ENCODE measurements at regions of chr7 and their contacts with region 1.

Region 1: GRCh38 chr7:46786221-46786954 is 795.5 kb downstream of the TNS3 start:
- DNase-seq: peak; percentile 96
- ATAC-seq: peak; percentile 91
- H3K4me3 ChIP-seq: peak overlapping the region; percentile 31; the same call in 1 of the 2 replicates
- H3K27ac ChIP-seq: peak overlapping the region; percentile 96
- H3K4me1 ChIP-seq: peaks cover 38% of the 10 kb centered on the region
- H3K27me3 ChIP-seq: no peaks in the 10 kb centered on the region
- CTCF ChIP-seq: no peak; the same call in 1 of the 2 replicates

Region 2: GRCh38 chr7:46544374-46545008 is 241.9 kb before region 1 on chr7:
- CTCF ChIA-PET with region 1: no interaction called
- POLR2A ChIA-PET with region 1: no interaction called
- intact Hi-C with region 1: loop called (anchors 1 kb)
- DNase-seq: peak; percentile 76
- ATAC-seq: peak; percentile 62
- H3K4me3 ChIP-seq: no peak overlapping the region
- H3K27ac ChIP-seq: peak overlapping the region; percentile 85
- H3K4me1 ChIP-seq: peaks cover 32% of the 10 kb centered on the region
- H3K27me3 ChIP-seq: no peaks in the 10 kb centered on the region
- CTCF ChIP-seq: no peak

Region 3: DNA sequence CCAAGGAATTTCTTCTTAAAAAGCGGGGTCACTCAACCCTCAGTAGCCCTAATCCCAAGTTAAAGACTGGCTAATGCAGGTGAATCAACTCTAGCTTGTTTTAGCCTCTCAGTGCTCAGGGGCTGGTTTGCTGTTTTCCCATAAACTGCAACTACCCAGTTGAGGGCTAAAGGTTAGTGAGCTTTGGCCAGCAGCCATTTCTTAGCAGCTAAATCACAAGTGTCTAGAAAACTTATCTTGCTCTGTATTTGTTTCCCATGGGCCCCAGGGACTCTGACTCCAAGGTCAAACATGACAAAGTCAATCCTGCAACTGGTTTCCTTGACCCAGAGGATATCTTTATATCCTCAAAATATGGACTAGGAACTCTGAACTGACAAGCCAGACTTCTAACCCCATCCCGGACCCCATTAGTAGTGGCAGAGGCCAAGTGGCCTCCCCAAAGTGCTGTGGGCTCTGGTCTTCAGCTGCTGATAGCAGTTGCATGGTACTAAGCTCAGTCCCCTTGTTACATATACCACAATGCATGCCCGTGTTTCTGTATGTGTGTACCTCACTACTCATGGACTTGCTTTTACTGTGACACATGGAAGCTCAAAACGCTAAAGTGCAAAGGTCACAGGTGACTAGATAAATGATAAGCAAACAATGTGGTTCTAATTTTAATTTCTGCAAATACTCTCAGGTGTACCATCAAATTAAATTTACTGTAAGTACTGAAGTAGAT is 72.4 kb before region 1 on chr7:
- CTCF ChIA-PET with region 1: no interaction called
- POLR2A ChIA-PET with region 1: no interaction called
- intact Hi-C with region 1: no loop called
- DNase-seq: no peak
- ATAC-seq: no peak
- H3K4me3 ChIP-seq: no peak overlapping the region
- H3K27ac ChIP-seq: no peak overlapping the region
- H3K4me1 ChIP-seq: no peaks in the 10 kb centered on the region
- H3K27me3 ChIP-seq: no peaks in the 10 kb centered on the region
- CTCF ChIP-seq: no peak

Region 4: GRCh38 chr7:46764100-46764936 is 22.1 kb before region 1 on chr7:
- CTCF ChIA-PET with region 1: no interaction called
- POLR2A ChIA-PET with region 1: no interaction called
- intact Hi-C with region 1: loop called (anchors 1 kb)
- DNase-seq: peak; percentile 97
- ATAC-seq: peak; percentile 99
- H3K4me3 ChIP-seq: no peak overlapping the region
- H3K27ac ChIP-seq: peak overlapping the region; percentile 69
- H3K4me1 ChIP-seq: peaks cover 17% of the 10 kb centered on the region
- H3K27me3 ChIP-seq: no peaks in the 10 kb centered on the region
- CTCF ChIP-seq: no peak

Region 5: DNA sequence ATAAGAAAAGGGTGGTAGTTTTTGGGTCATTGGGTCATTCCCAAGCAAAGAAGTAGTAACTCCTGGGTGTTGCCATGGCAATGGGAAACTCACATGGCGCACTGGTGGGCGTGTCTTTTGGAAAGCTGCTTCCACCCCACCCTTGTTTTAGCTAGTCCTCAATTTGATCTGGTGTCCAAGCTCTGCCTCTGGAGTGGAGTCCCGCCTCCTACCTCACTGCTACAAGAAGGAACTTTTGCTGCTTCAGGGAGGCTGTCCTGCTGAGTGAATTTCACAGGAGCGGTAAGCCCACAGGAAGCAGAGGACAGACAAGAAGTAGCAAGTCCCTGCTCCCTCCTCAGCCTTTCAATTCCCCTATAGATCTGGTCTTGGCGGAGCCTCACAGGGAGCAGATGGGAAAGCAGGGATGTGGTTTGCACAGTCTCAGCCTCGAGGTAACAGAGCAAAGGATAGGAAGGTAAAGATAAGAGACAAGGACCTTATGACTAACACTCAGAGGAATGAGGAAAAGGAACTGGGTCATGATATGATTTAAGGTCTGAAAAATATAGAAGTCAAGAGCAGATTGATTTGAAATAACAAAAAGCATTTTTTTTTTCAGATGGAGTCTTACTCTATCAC is 95.2 kb after region 1 on chr7:
- CTCF ChIA-PET with region 1: no interaction called
- POLR2A ChIA-PET with region 1: interaction called, 10 read pairs
- intact Hi-C with region 1: no loop called
- DNase-seq: peak; percentile 31
- ATAC-seq: peak; percentile 49; the same call in 1 of the 2 replicates
- H3K4me3 ChIP-seq: no peak overlapping the region
- H3K27ac ChIP-seq: no peak overlapping the region
- H3K4me1 ChIP-seq: peaks cover 6% of the 10 kb centered on the region
- H3K27me3 ChIP-seq: no peaks in the 10 kb centered on the region
- CTCF ChIP-seq: no peak

Region 6: DNA sequence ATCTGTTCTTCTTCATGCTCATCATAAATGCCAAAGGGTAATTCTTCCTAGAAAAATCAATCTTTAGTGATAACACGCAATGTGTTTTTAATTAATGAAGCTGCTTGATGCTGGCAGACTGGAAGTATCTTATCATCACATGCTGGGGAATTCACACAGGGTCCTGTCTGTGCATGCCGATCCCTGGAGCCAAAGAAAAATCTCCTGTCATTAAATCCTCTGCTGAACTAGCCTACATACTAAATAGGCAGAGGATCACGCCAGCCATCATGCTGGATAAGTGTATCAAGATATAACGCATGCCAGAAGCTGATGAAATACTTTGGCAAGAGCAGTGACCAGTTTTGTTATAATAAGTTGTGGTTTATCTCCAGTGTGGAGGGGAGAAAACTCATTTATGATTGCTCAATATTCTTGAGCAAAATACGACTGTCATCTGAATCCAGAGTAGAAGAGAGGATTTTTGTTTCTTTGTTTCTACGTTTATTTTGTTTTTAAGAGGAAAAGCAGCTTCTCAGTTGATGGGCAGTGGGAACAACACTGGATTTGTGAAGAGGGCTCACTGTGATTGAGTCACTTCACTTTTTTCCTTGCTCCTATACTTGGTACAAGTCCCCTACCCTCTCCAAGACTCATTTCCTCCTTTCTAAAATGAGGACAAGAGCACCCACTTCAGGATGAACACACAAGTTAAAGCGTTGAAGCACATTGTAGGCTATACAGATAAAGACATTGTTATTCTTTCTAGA is 146.5 kb after region 1 on chr7:
- CTCF ChIA-PET with region 1: no interaction called
- POLR2A ChIA-PET with region 1: no interaction called
- intact Hi-C with region 1: loop called (anchors 1 kb)
- DNase-seq: peak; percentile 52
- ATAC-seq: no peak
- H3K4me3 ChIP-seq: no peak overlapping the region
- H3K27ac ChIP-seq: no peak overlapping the region
- H3K4me1 ChIP-seq: peaks cover 18% of the 10 kb centered on the region
- H3K27me3 ChIP-seq: no peaks in the 10 kb centered on the region
- CTCF ChIP-seq: peak; percentile 34; the same call in 1 of the 2 replicates

Region 7: GRCh38 chr7:47080816-47081215 is 294.4 kb after region 1 on chr7:
- CTCF ChIA-PET with region 1: no interaction called
- POLR2A ChIA-PET with region 1: no interaction called
- intact Hi-C with region 1: no loop called
- DNase-seq: no peak
- ATAC-seq: no peak
- H3K4me3 ChIP-seq: no peak overlapping the region
- H3K27ac ChIP-seq: no peak overlapping the region
- H3K4me1 ChIP-seq: no peaks in the 10 kb centered on the region
- H3K27me3 ChIP-seq: no peaks in the 10 kb centered on the region
- CTCF ChIP-seq: no peak